CD4-positive, alpha-beta memory T cell (primary cell): ENCODE measurements at regions of chr13 and their contacts with region 1.

Region 1: DNA sequence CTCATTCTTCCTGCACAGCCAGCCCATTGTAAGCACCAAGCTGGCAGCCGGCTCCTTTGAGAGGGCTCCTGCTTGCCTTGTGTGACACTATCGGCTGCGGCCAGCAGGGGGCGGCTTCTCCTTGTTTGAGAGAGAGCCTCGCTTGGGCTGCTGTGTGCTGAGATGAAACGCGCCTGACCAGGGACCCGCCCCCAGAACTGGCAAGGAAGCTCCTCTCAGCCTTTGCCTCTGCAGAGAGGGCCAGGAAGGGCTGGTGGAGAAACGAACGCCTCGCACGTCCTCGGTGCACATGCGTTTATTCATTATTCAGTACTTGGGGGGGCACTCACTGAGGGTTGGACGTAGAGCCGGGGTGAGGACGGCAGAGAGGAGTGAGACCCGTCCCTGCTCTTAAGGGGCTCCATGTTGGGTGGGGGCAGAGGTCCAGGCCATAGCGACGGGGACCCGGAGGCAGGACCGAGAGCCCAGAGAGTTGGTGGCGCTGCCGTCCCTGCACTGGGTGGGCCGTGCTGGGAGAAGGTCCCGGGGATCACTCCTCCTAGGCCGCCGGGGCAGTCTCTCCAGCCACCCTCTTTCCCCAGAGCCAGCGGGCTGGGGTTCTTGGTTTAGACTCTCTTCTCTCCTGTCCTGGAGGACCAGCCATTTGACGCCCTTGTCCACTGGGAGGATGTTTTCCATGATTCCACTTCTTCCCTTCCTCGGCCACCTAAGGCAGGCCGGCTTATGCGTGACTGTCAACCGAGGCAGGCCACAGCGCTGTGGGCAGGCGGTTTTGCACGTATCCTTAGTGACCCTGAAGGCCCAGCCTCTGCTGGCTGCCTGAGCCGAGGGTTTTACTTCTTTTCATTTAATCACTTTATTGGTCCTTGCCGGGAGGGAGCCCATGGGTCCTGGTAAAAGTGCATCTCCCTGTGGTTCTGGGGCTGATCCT is 174.5 kb downstream of the KATNAL1 start:
- DNase-seq: peak; percentile 91 to 95 (median 93)
- H3K4me3 ChIP-seq: no peak overlapping the region
- H3K4me3 Mint-ChIP-seq: peak overlapping the region in 6 of 8 donors; percentile 17 to 78 (median 63)
- H3K27ac ChIP-seq: no peak overlapping the region
- H3K27ac Mint-ChIP-seq: peak overlapping the region in 6 of 7 donors; percentile 22 to 88 (median 82)
- H3K4me1 ChIP-seq: peaks cover 12% of the 10 kb centered on the region
- H3K4me1 Mint-ChIP-seq: peaks cover 10 to 19% (median 14%) of the 10 kb centered on the region in 4 donors
- H3K27me3 ChIP-seq: no peaks in the 10 kb centered on the region
- H3K27me3 Mint-ChIP-seq: no peaks in the 10 kb centered on the region

Region 2: DNA sequence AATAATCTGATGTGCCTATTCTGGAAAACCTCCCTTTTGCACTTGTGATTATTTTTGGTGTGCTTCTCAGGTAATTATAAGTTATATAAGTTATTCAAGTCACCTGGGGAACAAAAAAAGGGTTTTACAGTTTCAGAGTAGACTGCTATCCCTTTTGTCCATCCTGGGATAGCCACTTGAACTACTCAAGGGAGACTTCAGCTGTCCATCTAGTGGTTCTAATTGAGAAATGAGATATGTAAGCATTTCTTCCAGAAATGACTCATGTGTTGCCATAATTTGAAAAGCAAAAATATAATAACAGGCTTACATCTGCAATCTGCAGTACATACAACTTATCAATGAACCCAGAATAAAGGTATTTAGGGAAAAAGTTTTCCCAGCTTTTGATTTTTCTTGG is 302.9 kb before region 1 on chr13:
- CTCF ChIA-PET with region 1: no interaction called
- POLR2A ChIA-PET with region 1: no interaction called
- intact Hi-C with region 1: no loop called
- DNase-seq: no peak
- H3K4me3 ChIP-seq: no peak overlapping the region
- H3K4me3 Mint-ChIP-seq: no peak overlapping the region
- H3K27ac ChIP-seq: no peak overlapping the region
- H3K27ac Mint-ChIP-seq: no peak overlapping the region
- H3K4me1 ChIP-seq: no peaks in the 10 kb centered on the region
- H3K4me1 Mint-ChIP-seq: peaks cover 25 to 51% (median 29%) of the 10 kb centered on the region in 4 donors
- H3K27me3 ChIP-seq: no peaks in the 10 kb centered on the region
- H3K27me3 Mint-ChIP-seq: no peaks in the 10 kb centered on the region

Region 3: DNA sequence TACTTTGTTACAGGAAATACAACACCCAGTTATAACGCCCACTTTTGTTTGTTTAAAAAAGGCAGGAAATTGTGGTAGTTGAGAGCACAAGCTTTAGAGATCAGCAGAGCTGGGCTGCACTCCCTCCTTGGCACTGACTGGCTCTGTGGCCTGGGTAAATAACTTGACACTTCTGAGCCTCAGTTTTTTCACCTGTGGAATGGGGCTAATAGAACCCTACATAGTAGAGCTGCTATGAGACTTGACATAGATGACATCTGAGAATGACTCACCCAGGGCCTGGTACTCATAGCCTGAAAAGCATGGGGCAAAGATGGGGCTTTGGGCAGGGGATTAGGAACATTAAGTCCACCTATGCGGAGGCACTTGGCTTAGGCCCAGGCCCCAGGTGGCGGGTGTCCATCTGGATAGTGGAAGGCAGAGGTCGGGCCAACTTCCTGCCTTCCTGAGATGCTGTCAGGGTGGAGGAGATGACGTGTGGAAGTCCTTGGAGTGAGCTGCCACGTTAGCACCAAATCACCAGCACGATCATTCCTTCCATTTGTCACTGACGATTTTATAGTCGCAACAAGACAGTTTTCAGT is 15.4 kb after region 1 on chr13:
- CTCF ChIA-PET with region 1: interaction called, 974 read pairs
- POLR2A ChIA-PET with region 1: interaction called, 440 read pairs
- intact Hi-C with region 1: loop called (anchors 1 kb)
- DNase-seq: peak; percentile 73 to 81 (median 80)
- H3K4me3 ChIP-seq: peak overlapping the region in 1 of 2 donors; percentile 31
- H3K4me3 Mint-ChIP-seq: peak overlapping the region in 7 of 8 donors; percentile 70 to 88 (median 75)
- H3K27ac ChIP-seq: peak overlapping the region; percentile 60
- H3K27ac Mint-ChIP-seq: peak overlapping the region; percentile 90 to 97 (median 93)
- H3K4me1 ChIP-seq: peaks cover 99% of the 10 kb centered on the region
- H3K4me1 Mint-ChIP-seq: peaks cover 79 to 100% (median 93%) of the 10 kb centered on the region in 4 donors
- H3K27me3 ChIP-seq: no peaks in the 10 kb centered on the region
- H3K27me3 Mint-ChIP-seq: no peaks in the 10 kb centered on the region

Region 4: GRCh38 chr13:30169442-30169841 is 36.6 kb after region 1 on chr13:
- CTCF ChIA-PET with region 1: interaction called, 974 read pairs
- POLR2A ChIA-PET with region 1: interaction called, 4 read pairs
- intact Hi-C with region 1: no loop called
- DNase-seq: no peak
- H3K4me3 ChIP-seq: no peak overlapping the region
- H3K4me3 Mint-ChIP-seq: no peak overlapping the region
- H3K27ac ChIP-seq: no peak overlapping the region
- H3K27ac Mint-ChIP-seq: peak overlapping the region in 1 of 7 donors; percentile 22
- H3K4me1 ChIP-seq: peaks cover 6% of the 10 kb centered on the region
- H3K4me1 Mint-ChIP-seq: peaks cover 7 to 20% (median 10%) of the 10 kb centered on the region in 4 donors
- H3K27me3 ChIP-seq: no peaks in the 10 kb centered on the region
- H3K27me3 Mint-ChIP-seq: no peaks in the 10 kb centered on the region

Region 5: GRCh38 chr13:30334663-30335386 is 201.9 kb after region 1 on chr13:
- CTCF ChIA-PET with region 1: interaction called, 22 read pairs
- POLR2A ChIA-PET with region 1: no interaction called
- intact Hi-C with region 1: loop called (anchors 2 kb)
- DNase-seq: peak in 4 of 5 donors; percentile 22 to 47 (median 34)
- H3K4me3 ChIP-seq: no peak overlapping the region
- H3K4me3 Mint-ChIP-seq: no peak overlapping the region
- H3K27ac ChIP-seq: no peak overlapping the region
- H3K27ac Mint-ChIP-seq: peak overlapping the region in 1 of 7 donors; percentile 16
- H3K4me1 ChIP-seq: peaks cover 9% of the 10 kb centered on the region
- H3K4me1 Mint-ChIP-seq: peaks cover 13 to 35% (median 22%) of the 10 kb centered on the region in 4 donors
- H3K27me3 ChIP-seq: no peaks in the 10 kb centered on the region
- H3K27me3 Mint-ChIP-seq: no peaks in the 10 kb centered on the region

Region 6: DNA sequence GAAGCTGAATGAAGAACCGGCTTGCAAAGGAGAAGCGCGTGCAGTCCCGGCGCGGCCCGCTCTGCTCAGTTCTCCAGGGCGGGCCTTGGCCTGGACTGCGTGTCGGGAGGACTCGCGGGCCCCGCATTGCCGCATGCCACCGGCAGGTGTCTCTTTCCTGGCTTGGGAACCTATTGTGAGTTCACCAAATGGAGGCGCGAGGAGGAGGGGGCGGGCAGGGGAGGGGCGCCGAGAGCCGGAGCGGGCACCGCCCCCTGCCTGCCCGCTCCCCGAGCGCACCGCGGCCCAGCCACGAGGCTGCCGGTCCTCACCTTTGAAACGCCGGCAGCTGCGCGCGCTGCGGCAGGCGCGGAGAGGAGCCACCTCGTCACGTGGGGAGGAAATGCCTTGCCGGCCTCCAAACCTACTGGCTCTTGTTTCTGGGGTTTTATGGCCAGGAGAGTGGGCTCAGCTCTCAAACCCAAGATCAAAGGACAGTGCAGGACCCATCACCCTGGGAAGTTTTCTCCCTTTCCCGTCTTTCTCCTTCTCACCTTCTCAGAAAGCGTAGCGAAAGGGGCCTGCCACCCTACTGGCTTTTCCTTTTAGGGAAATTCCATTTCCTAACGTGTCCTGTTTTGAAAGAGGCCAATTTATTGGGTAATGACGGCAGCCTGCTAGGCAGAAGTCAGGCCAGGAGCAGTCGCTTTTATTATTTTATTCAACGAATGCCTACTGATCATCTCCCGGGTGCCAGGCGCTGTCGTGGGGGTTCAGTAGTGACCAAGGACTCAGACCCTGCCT is 275.6 kb after region 1 on chr13:
- CTCF ChIA-PET with region 1: interaction called, 10 read pairs
- POLR2A ChIA-PET with region 1: no interaction called
- intact Hi-C with region 1: no loop called
- DNase-seq: peak; percentile 87 to 91 (median 87)
- H3K4me3 ChIP-seq: peak overlapping the region in 1 of 2 donors; percentile 33
- H3K4me3 Mint-ChIP-seq: peak overlapping the region; percentile 46 to 79 (median 68)
- H3K27ac ChIP-seq: peak overlapping the region; percentile 40
- H3K27ac Mint-ChIP-seq: peak overlapping the region; percentile 75 to 91 (median 87)
- H3K4me1 ChIP-seq: peaks cover 14% of the 10 kb centered on the region
- H3K4me1 Mint-ChIP-seq: peaks cover 14 to 52% (median 27%) of the 10 kb centered on the region in 4 donors
- H3K27me3 ChIP-seq: no peaks in the 10 kb centered on the region
- H3K27me3 Mint-ChIP-seq: no peaks in the 10 kb centered on the region

Region 7: GRCh38 chr13:30572859-30573275 is 440.0 kb after region 1 on chr13:
- CTCF ChIA-PET with region 1: interaction called, 10 read pairs
- POLR2A ChIA-PET with region 1: interaction called, 4 read pairs
- intact Hi-C with region 1: loop called (anchors 1 kb)
- DNase-seq: peak; percentile 33 to 53 (median 43)
- H3K4me3 ChIP-seq: peak overlapping the region; percentile 37 to 64
- H3K4me3 Mint-ChIP-seq: peak overlapping the region; percentile 67 to 88 (median 79)
- H3K27ac ChIP-seq: peak overlapping the region; percentile 62
- H3K27ac Mint-ChIP-seq: peak overlapping the region; percentile 56 to 94 (median 91)
- H3K4me1 ChIP-seq: peaks cover 36% of the 10 kb centered on the region
- H3K4me1 Mint-ChIP-seq: peaks cover 28 to 47% (median 33%) of the 10 kb centered on the region in 4 donors
- H3K27me3 ChIP-seq: no peaks in the 10 kb centered on the region
- H3K27me3 Mint-ChIP-seq: no peaks in the 10 kb centered on the region

Region 8: GRCh38 chr13:30802953-30803478 is 670.1 kb after region 1 on chr13:
- CTCF ChIA-PET with region 1: interaction called, 4 read pairs
- POLR2A ChIA-PET with region 1: no interaction called
- intact Hi-C with region 1: loop called (anchors 1 kb)
- DNase-seq: peak; percentile 71 to 78 (median 74)
- H3K4me3 ChIP-seq: no peak overlapping the region
- H3K4me3 Mint-ChIP-seq: peak overlapping the region; percentile 32 to 76 (median 62)
- H3K27ac ChIP-seq: no peak overlapping the region
- H3K27ac Mint-ChIP-seq: peak overlapping the region in 4 of 7 donors; percentile 46 to 70 (median 62)
- H3K4me1 ChIP-seq: peaks cover 9% of the 10 kb centered on the region
- H3K4me1 Mint-ChIP-seq: peaks cover 7 to 21% (median 8%) of the 10 kb centered on the region in 4 donors
- H3K27me3 ChIP-seq: no peaks in the 10 kb centered on the region
- H3K27me3 Mint-ChIP-seq: no peaks in the 10 kb centered on the region